ENCODE measurements at regions of chr6 and their contacts with region 1.

Region 1: GRCh38 chr6:49849213-49849907 is 17.0 kb downstream of the CRISP1 start:
- DNase-seq: no peak
- H3K4me3 ChIP-seq: no peak overlapping the region
- H3K27ac ChIP-seq: no peak overlapping the region
- H3K4me1 ChIP-seq: no peaks in the 10 kb centered on the region
- H3K27me3 ChIP-seq: no peaks in the 10 kb centered on the region
- CTCF ChIP-seq: peak; percentile 57 to 64 (median 60)
- EP300 ChIP-seq: no peak
- POLR2A ChIP-seq: no peak

Region 2: DNA sequence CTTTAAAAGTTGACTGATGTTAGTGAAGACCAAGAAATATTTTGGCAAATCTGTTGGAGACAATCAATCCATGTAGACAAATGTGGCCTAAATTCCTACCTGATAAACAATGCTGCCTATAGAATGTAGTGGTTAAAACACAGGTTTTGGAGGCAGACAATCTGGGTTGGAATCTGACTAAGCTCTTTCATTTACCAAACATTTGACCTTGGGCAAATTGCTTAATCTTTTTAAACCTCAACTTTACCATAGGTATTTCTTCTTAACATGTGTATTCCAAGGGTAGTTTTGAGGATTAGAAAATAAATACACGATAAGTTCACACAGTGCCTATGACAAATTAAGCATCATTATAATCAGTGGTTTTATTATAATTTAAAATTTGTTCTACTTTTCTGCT is 224.2 kb before region 1 on chr6:
- in situ Hi-C with region 1: no loop called
- intact Hi-C with region 1: loop called (anchors 10 kb)
- DNase-seq: no peak
- H3K4me3 ChIP-seq: no peak overlapping the region
- H3K27ac ChIP-seq: no peak overlapping the region
- H3K4me1 ChIP-seq: no peaks in the 10 kb centered on the region
- H3K27me3 ChIP-seq: no peaks in the 10 kb centered on the region
- CTCF ChIP-seq: no peak
- EP300 ChIP-seq: no peak
- POLR2A ChIP-seq: no peak

Region 3: GRCh38 chr6:50259903-50260302 is 410.5 kb after region 1 on chr6:
- in situ Hi-C with region 1: no loop called
- intact Hi-C with region 1: no loop called
- DNase-seq: no peak
- H3K4me3 ChIP-seq: no peak overlapping the region
- H3K27ac ChIP-seq: no peak overlapping the region
- H3K4me1 ChIP-seq: no peaks in the 10 kb centered on the region
- H3K27me3 ChIP-seq: no peaks in the 10 kb centered on the region
- CTCF ChIP-seq: no peak
- EP300 ChIP-seq: no peak
- POLR2A ChIP-seq: no peak